ENCODE measurements at regions of chr14 and their contacts with region 1.

Region 1: GRCh38 chr14:106691601-106692291 is 1165.4 kb downstream of the TMEM121 start:
- DNase-seq: peak; percentile 78
- CTCF ChIP-seq: peak; percentile 100

Region 2: DNA sequence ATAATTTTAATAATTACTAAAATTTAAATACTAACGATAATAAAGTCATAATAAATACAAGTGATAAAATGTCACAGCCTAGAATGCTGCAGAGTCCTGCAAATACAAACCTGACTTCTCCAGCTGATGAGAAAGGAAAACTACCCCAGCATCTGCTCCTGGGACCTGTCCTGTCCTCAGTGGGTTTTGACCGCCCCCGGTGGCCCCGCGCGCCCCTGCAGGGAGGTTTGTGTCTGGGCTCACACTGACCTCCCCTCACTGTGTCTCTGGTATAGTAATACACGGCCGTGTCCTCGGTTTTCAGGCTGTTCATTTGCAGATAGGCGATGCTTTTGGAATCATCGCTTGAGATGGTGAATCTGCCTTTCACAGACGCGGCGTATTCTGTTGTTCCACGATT is 25.9 kb before region 1 on chr14:
- CTCF ChIA-PET with region 1: interaction called, 39 read pairs
- POLR2A ChIA-PET with region 1: no interaction called
- DNase-seq: no peak
- CTCF ChIP-seq: peak; percentile 14

Region 3: DNA sequence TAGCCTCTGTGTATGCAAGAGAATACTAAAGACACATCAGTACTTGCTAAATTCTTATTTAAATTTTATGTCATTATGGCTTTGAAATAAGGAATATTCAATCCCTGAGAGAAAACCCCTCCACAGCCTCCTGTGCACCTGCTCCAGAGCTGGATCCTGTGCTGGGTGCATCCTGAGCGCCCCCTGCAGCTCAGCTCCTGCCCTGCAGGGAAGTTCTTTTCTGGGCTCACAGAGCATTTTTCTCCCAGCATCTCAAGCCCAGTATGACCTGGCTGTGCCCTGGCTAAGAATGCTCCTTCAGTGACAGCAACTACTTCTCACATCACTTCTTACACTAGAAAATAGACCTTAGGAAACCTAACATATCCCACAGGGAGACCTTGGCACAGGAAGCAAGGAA is 46.3 kb after region 1 on chr14:
- CTCF ChIA-PET with region 1: interaction called, 57 read pairs
- POLR2A ChIA-PET with region 1: interaction called, 4 read pairs
- DNase-seq: no peak
- CTCF ChIP-seq: no peak

Region 4: GRCh38 chr14:106776395-106776983 is 84.7 kb after region 1 on chr14:
- CTCF ChIA-PET with region 1: interaction called, 11 read pairs
- POLR2A ChIA-PET with region 1: no interaction called
- DNase-seq: no peak
- CTCF ChIP-seq: no peak

Measured in GM10248 (cell line).